Ovary (tissue), 10 donors: ENCODE measurements at regions of chr17 and their contacts with region 1.

Region 1: GRCh38 chr17:21400816-21401593 is 24.8 kb downstream of the KCNJ12 start:
- DNase-seq: no peak
- H3K4me3 ChIP-seq: no peak overlapping the region
- H3K27ac ChIP-seq: no peak overlapping the region
- H3K4me1 ChIP-seq: no peaks in the 10 kb centered on the region
- H3K27me3 ChIP-seq: no peaks in the 10 kb centered on the region
- CTCF ChIP-seq: no peak
- EP300 ChIP-seq: no peak
- POLR2A ChIP-seq: no peak

Region 2: DNA sequence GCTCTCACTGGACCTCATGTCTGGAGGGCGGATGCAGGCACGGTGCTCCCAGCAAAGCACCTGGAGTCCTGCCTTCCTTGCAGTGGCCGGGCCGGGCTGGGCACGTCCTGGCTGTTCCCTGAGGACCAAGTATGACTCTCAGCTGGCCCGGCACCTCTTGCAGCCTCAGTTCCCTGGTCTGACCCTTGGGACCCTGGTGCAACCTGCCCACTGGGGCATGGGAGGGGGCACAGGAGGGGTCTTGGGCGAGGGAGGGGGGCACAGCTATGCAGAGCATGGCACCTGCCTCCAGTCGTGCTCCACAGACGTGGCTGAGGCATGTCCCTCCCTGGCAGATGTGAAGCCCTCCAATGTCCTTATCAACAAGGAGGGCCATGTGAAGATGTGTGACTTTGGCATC is 96.9 kb before region 1 on chr17:
- intact Hi-C with region 1: no loop called
- DNase-seq: peak in 3 of 5 donors; percentile 15 to 31 (median 22)
- H3K4me3 ChIP-seq: no peak overlapping the region
- H3K27ac ChIP-seq: no peak overlapping the region
- H3K4me1 ChIP-seq: no peaks in the 10 kb centered on the region
- H3K27me3 ChIP-seq: no peaks in the 10 kb centered on the region
- CTCF ChIP-seq: no peak
- EP300 ChIP-seq: no peak
- POLR2A ChIP-seq: no peak

Region 3: DNA sequence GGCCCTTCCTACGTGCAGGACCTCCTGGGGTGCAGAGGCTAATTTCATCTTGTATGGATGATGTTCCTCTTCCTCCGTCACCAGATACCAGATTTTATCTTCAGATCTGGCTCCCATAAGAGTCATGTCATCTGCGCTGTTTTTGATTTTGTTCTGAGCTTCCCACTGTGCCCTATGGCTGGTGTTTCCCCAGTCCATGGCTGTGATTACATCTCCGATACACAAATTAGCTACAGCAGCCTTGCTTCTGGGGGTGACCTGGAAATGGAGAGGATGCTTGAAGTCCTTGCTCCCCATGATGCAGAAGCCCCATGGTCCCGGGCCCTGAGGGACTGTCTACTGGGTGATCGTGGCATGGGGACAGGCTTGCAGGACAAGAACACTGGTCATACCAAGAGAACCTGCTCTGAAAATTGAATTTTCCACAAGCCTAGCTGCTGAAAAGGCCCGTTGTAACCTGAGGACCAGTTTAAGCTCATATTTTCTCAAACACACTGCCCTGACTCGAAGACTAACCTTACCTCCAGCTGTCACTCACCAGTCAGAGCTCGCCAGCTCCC is 44.2 kb after region 1 on chr17:
- intact Hi-C with region 1: no loop called
- DNase-seq: no peak
- H3K4me3 ChIP-seq: no peak overlapping the region
- H3K27ac ChIP-seq: no peak overlapping the region
- H3K4me1 ChIP-seq: no peaks in the 10 kb centered on the region
- H3K27me3 ChIP-seq: no peaks in the 10 kb centered on the region
- CTCF ChIP-seq: no peak
- EP300 ChIP-seq: no peak
- POLR2A ChIP-seq: no peak

Region 4: DNA sequence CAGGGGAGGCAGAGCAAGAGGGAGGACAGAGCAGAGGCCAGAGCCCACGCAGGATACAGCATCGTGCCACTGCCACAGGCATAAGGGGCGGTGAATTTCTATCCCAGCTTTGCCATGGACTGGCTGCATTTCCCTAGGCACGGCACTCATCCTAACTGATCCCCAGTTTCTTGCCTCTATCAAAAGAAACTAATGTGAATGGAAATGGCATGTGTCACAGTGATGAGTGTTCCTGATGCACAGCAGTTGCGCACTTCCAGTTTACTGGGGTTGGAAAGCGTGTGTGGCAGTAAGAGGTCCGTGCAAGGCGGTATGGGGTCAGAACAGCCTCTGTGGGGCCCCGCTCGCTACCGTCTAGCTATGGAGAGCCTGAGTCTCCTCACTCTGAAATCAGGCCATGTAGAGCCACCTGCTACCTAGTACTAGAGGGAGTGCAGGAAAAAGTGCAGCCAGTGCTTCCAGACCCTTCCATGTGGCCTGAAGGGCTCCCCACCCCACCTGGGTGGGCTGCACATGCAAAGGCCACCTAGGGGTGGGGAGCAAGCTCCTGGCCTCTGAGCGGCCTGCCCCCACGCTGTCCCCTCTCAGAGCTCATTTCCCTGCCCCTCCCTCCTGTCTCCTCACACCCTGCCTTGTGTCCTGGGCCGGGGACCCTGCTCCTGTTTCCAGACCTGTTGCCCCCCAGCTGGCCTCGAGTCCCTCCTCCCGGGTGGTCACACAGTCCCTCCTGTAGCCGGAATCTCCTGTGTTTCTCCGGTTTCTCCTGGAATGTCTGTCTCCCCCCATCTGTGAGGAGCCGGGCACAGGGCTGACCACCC is 286.3 kb after region 1 on chr17:
- intact Hi-C with region 1: loop called in 1 of 4 experiments (anchors 2 kb)
- DNase-seq: no peak
- H3K4me3 ChIP-seq: no peak overlapping the region
- H3K27ac ChIP-seq: no peak overlapping the region
- H3K4me1 ChIP-seq: no peaks in the 10 kb centered on the region
- H3K27me3 ChIP-seq: no peaks in the 10 kb centered on the region
- CTCF ChIP-seq: no peak
- EP300 ChIP-seq: no peak
- POLR2A ChIP-seq: no peak